Left lung (tissue), 14 donors: ENCODE measurements at regions of chr4 and their contacts with region 1.

Region 1: GRCh38 chr4:142126890-142127497 is 490.6 kb downstream of the IL15 start:
- DNase-seq: peak in 2 of 4 donors; percentile 59 to 84
- ATAC-seq: peak; percentile 83
- H3K4me3 ChIP-seq: no peak overlapping the region
- H3K27ac ChIP-seq: no peak overlapping the region
- H3K4me1 ChIP-seq: no peaks in the 10 kb centered on the region
- H3K27me3 ChIP-seq: no peaks in the 10 kb centered on the region
- CTCF ChIP-seq: peak; percentile 58 to 85

Region 2: DNA sequence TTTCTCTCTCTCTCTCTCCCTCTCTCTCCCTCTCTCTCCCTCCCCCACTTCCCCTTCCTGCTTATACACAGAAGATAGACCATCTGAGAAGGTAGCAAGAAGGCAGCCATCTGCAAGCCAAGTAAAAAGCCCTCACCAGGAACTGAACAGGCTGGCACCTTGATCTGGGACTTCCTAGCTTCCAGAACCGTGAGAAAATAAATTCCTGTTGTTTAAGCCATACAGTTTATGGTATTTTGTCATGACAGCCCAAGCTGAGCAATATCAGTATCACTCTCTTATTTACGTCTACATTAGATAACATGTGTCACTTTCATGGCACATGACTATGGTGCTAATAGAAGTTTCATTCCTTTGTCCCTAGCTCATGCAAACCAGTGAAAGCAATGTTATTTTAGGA is 138.0 kb after region 1 on chr4:
- intact Hi-C with region 1: no loop called
- DNase-seq: peak in 2 of 4 donors; percentile 65 to 66
- ATAC-seq: no peak
- H3K4me3 ChIP-seq: no peak overlapping the region
- H3K27ac ChIP-seq: peak overlapping the region in 1 of 2 donors; percentile 20
- H3K4me1 ChIP-seq: no peaks in the 10 kb centered on the region
- H3K27me3 ChIP-seq: no peaks in the 10 kb centered on the region
- CTCF ChIP-seq: no peak

Region 3: GRCh38 chr4:142846729-142847596 is 720.0 kb after region 1 on chr4:
- intact Hi-C with region 1: loop called in 1 of 2 experiments (anchors 10 kb)
- DNase-seq: peak in 3 of 4 donors; percentile 48 to 79 (median 58)
- ATAC-seq: peak; percentile 91
- H3K4me3 ChIP-seq: peak overlapping the region; percentile 50 to 57
- H3K27ac ChIP-seq: no peak overlapping the region
- H3K4me1 ChIP-seq: peaks cover 0 to 19% of the 10 kb centered on the region in 2 donors
- H3K27me3 ChIP-seq: peaks cover 10 to 44% of the 10 kb centered on the region in 2 donors
- CTCF ChIP-seq: peak; percentile 2 to 34